Activated naive CD4-positive, alpha-beta T cell treated with anti-CD3 and anti-CD28 coated beads for 36 hours (primary cell): ENCODE measurements at regions of chr14 and their contacts with region 1.

Region 1: GRCh38 chr14:68788996-68789820 is 3.7 kb downstream of the ZFP36L1 start:
- DNase-seq: peak; percentile 91
- H3K4me3 Mint-ChIP-seq: peak overlapping the region; percentile 90
- H3K27ac Mint-ChIP-seq: peak overlapping the region; percentile 100
- H3K4me1 Mint-ChIP-seq: peaks cover 55% of the 10 kb centered on the region
- H3K27me3 Mint-ChIP-seq: no peaks in the 10 kb centered on the region

Region 2: DNA sequence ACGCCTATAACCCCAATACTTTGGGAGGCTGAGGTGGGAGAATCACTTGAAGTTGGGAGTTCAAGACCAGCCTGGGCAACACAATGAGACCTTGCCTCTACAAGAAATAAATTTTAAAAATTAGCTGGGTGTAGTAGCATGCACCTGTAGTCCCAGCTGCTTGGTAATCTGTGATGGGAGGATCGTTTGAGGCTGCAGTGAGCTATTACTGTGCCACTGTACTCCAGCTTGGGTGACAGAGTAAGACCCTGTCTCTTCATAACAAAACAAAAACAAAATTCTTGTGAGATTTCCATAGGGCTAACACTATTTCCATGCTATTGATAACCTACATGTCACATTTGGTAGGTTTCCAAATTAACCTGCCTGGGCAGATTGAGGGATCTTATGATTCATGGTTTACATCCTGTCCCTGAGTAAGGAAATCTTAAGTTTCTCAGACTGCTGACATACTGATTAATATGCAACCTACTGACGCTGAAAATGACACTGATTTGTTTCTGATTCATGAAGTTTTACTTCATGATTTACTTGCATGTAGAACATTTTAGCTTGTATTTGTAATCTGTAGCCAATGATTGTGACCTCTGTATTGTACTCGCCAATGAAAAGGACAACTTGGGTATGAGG is 1445.5 kb before region 1 on chr14:
- CTCF ChIA-PET with region 1: no interaction called
- intact Hi-C with region 1: no loop called
- DNase-seq: no peak
- H3K4me3 Mint-ChIP-seq: no peak overlapping the region
- H3K27ac Mint-ChIP-seq: no peak overlapping the region
- H3K4me1 Mint-ChIP-seq: peaks cover 5% of the 10 kb centered on the region
- H3K27me3 Mint-ChIP-seq: no peaks in the 10 kb centered on the region

Region 3: GRCh38 chr14:68271913-68272425 is 517.2 kb before region 1 on chr14:
- CTCF ChIA-PET with region 1: no interaction called
- intact Hi-C with region 1: loop called (anchors 2 kb)
- DNase-seq: no peak
- H3K4me3 Mint-ChIP-seq: no peak overlapping the region
- H3K27ac Mint-ChIP-seq: no peak overlapping the region
- H3K4me1 Mint-ChIP-seq: peaks cover 64% of the 10 kb centered on the region
- H3K27me3 Mint-ChIP-seq: no peaks in the 10 kb centered on the region

Region 4: DNA sequence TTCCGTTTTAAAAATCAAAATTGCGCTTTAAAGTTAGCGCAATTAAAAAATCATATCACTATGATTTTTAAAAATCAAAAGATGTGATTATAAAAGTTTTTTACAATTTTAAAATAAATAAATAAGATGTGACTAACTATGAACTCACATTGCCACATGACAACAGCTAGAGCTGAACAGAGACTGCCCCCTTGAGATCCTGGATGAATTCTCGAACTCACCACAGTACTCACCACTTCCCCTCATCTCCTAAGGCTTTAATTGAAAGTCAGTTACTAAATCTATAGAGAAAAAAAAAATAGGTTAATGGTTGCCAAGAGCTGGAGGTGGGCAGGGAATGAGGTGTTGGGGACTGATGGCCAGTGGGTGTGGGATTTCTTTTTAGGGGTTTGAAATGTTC is 380.5 kb before region 1 on chr14:
- CTCF ChIA-PET with region 1: interaction called, 4 read pairs
- intact Hi-C with region 1: loop called (anchors 2 kb)
- DNase-seq: peak; percentile 34
- H3K4me3 Mint-ChIP-seq: no peak overlapping the region
- H3K27ac Mint-ChIP-seq: no peak overlapping the region
- H3K4me1 Mint-ChIP-seq: peaks cover 25% of the 10 kb centered on the region
- H3K27me3 Mint-ChIP-seq: no peaks in the 10 kb centered on the region

Region 5: DNA sequence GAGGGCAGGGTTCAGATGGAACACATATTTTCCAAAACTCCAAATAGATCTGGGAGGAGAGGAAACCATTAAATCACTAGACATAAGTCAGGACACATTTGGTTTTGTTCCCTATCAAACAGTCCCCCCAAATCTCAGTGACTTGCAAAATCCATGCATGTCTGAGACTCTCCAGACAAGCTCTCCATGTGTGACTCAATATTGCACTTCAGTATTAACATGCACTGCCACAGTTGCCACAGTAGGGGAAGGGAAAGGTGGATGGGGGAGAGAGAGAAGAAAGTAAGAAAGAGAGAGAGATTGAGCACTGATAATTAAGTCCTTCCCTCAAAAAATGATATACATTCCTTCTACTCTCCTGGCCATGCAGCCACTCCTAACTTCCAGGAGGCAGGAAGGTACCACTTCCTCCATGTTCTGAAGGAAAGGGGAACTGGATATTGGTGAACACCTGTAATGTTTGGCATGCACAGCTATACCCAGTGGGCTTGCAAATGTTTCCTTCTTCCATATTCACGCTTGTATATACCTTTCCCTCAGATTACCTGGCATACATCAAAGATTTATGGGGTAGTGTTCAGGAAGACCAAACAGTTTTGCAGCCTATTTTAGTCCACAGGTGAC is 306.3 kb before region 1 on chr14:
- CTCF ChIA-PET with region 1: no interaction called
- intact Hi-C with region 1: loop called (anchors 5 kb)
- DNase-seq: peak; percentile 19
- H3K4me3 Mint-ChIP-seq: no peak overlapping the region
- H3K27ac Mint-ChIP-seq: peak overlapping the region; percentile 37
- H3K4me1 Mint-ChIP-seq: peaks cover 54% of the 10 kb centered on the region
- H3K27me3 Mint-ChIP-seq: no peaks in the 10 kb centered on the region

Region 6: GRCh38 chr14:68685419-68686204 is 103.6 kb before region 1 on chr14:
- CTCF ChIA-PET with region 1: interaction called, 3 read pairs
- intact Hi-C with region 1: loop called (anchors 1 kb)
- DNase-seq: peak; percentile 90
- H3K4me3 Mint-ChIP-seq: peak overlapping the region; percentile 19
- H3K27ac Mint-ChIP-seq: peak overlapping the region; percentile 91
- H3K4me1 Mint-ChIP-seq: peaks cover 54% of the 10 kb centered on the region
- H3K27me3 Mint-ChIP-seq: no peaks in the 10 kb centered on the region

Region 7: GRCh38 chr14:68757618-68758081 is 31.6 kb before region 1 on chr14:
- CTCF ChIA-PET with region 1: no interaction called
- intact Hi-C with region 1: no loop called
- DNase-seq: no peak
- H3K4me3 Mint-ChIP-seq: no peak overlapping the region
- H3K27ac Mint-ChIP-seq: no peak overlapping the region
- H3K4me1 Mint-ChIP-seq: peaks cover 11% of the 10 kb centered on the region
- H3K27me3 Mint-ChIP-seq: no peaks in the 10 kb centered on the region

Region 8: DNA sequence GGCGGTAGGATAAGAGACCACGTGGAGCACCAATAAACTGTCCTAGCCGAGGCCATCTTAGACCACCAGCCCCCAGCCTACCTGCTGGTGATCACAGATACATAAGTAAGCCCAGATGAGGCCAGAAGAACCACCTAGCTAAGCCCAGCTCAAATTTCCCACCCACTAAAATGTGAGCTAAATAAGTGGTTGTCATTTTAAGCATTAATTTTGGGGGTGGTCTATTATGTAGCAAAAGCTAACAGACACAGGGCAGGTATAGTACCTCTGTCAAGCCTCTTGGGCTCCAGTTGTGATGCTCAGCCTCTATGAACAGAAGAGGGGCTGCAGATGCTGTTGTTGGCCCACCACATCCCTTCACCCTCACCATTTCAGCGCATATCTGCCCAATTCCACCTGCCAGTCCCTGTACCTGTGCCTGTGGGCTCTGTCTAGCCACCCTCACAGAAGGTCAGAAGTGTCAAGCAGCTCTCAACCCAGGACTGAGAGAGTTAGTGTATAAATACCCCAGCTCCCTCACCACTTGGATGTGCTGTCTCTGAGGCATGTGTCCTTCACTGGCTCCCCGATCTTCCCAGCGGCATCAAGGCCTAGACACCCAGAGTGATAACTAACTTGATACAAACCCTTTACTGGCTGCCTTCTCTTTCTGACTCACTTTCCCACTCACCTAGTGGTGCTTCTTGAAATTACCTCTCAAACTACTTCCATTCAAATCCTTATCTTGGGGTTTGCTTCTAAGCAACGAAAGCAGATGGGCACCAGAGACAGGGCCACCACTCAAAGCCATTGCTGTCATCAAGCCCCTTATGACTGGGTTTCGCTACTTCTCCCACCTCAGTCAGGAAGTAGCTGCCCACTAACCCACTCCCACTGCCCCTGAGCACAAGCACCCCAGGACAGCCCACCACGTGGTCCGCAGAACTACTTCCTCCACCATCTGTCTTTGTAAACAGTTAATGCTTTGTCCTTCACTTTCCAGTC is 13.8 kb before region 1 on chr14:
- CTCF ChIA-PET with region 1: interaction called, 42 read pairs
- intact Hi-C with region 1: no loop called
- DNase-seq: no peak
- H3K4me3 Mint-ChIP-seq: no peak overlapping the region
- H3K27ac Mint-ChIP-seq: no peak overlapping the region
- H3K4me1 Mint-ChIP-seq: peaks cover 78% of the 10 kb centered on the region
- H3K27me3 Mint-ChIP-seq: no peaks in the 10 kb centered on the region